ENCODE measurements at regions of chr22 and their contacts with region 1.

Region 1: GRCh38 chr22:24247011-24247507 is 2.2 kb upstream of the GGT5 start:
- DNase-seq: no peak
- H3K4me3 ChIP-seq: peak overlapping the region; percentile 10; the same call in 1 of the 2 replicates
- H3K27ac ChIP-seq: peak overlapping the region; percentile 98
- H3K27me3 ChIP-seq: no peaks in the 10 kb centered on the region
- CTCF ChIP-seq: no peak

Region 2: DNA sequence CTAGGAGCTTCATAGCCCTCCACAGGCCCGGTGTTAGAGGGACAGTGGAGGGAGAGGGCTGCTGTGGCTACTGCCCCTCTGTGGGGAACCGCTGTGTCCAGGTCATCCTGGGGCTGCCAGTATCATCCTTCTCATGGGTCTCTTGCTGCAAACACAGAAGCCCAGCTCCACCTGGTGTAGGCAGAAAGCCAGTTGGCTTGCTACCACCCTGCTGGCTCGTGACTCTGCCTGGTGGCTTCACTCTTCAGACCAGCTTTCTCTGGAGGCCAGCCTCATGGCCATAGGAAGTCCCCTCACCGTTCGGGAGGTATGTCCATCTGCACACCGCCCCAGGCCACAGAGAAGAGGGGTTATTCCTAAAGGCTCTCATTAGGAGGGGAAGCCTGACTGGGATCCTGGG is 85.2 kb before region 1 on chr22:
- CTCF ChIA-PET with region 1: no interaction called
- POLR2A ChIA-PET with region 1: no interaction called
- DNase-seq: no peak
- H3K4me3 ChIP-seq: no peak overlapping the region
- H3K27ac ChIP-seq: no peak overlapping the region
- H3K27me3 ChIP-seq: no peaks in the 10 kb centered on the region
- CTCF ChIP-seq: no peak

Region 3: DNA sequence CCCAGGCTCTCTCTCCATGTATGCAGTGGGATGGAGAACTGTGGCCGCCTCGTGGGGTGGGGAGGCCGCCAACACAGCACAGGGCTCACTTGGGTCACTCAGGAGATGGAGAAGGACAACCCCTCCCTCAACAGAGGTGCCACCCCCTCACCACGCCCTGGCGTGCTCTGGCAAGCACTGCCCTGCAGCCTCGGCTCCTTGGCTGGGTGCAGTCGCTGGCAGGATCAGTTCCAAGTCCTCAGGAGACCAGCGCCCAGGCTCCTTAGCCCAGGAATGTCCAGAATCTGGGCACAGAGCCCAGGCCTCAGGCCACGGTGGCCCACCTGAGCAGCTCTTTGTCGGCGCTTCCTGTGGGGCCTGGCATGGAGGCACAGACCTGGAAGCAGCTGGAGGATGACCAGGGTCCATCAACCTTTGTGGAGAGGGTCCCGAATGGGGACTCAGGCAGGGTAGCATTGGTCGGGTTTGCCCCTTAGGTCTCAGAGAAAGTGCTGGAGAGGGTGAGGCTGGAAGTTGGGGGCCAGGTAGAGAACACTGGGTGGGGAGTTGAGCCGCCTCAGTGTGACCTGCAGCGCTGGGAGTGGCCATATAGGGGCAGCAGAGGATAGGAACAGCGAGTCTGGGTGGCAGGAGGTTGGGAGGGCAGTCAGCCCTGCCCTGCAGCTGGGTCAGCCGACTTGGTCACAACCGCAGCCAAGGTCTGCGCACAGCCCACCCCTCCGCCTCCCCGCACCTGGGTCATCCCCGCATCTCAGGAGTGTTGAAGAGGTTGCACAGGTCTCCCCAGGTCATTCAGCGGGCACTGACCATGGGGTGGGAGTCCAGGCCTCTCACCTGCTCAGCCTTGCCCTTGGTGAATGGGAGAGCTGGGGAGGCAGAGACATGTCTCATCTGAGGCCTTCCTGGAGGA is 57.6 kb before region 1 on chr22:
- CTCF ChIA-PET with region 1: interaction called, 23 read pairs
- POLR2A ChIA-PET with region 1: interaction called, 14 read pairs
- DNase-seq: peak; percentile 26
- H3K4me3 ChIP-seq: no peak overlapping the region
- H3K27ac ChIP-seq: no peak overlapping the region
- H3K27me3 ChIP-seq: no peaks in the 10 kb centered on the region
- CTCF ChIP-seq: peak; percentile 93

Region 4: GRCh38 chr22:24198682-24199052 is 48.4 kb before region 1 on chr22:
- CTCF ChIA-PET with region 1: interaction called, 13 read pairs
- POLR2A ChIA-PET with region 1: interaction called, 3 read pairs
- DNase-seq: no peak
- H3K4me3 ChIP-seq: no peak overlapping the region
- H3K27ac ChIP-seq: no peak overlapping the region
- H3K27me3 ChIP-seq: no peaks in the 10 kb centered on the region
- CTCF ChIP-seq: no peak

Measured in AG04450 (cell line).